Naive thymus-derived CD4-positive, alpha-beta T cell (primary cell): ENCODE measurements at regions of chr20 and their contacts with region 1.

Region 1: GRCh38 chr20:38926142-38926933 is at the start of gene FAM83D:
- DNase-seq: peak; percentile 86 to 98 (median 92)
- ATAC-seq: peak; percentile 97
- H3K4me3 ChIP-seq: peak within 1 kb of the TSS; percentile 61
- H3K4me3 Mint-ChIP-seq: peak within 1 kb of the TSS; percentile 76 to 90 (median 80)
- H3K27ac ChIP-seq: peak within 1 kb of the TSS; percentile 64
- H3K27ac Mint-ChIP-seq: peak within 1 kb of the TSS in 8 of 9 donors; percentile 27 to 83 (median 72)
- H3K4me1 ChIP-seq: peaks cover 5 to 22% of the 10 kb centered on the region in 2 donors
- H3K4me1 Mint-ChIP-seq: peaks cover 6 to 43% (median 17%) of the 10 kb centered on the region in 7 donors
- H3K27me3 ChIP-seq: no peaks in the 10 kb centered on the region
- H3K27me3 Mint-ChIP-seq: no peaks in the 10 kb centered on the region
- total RNA-seq, gene FAM83D: 1.4 to 11.1 (median 1.8) TPM

Region 2: DNA sequence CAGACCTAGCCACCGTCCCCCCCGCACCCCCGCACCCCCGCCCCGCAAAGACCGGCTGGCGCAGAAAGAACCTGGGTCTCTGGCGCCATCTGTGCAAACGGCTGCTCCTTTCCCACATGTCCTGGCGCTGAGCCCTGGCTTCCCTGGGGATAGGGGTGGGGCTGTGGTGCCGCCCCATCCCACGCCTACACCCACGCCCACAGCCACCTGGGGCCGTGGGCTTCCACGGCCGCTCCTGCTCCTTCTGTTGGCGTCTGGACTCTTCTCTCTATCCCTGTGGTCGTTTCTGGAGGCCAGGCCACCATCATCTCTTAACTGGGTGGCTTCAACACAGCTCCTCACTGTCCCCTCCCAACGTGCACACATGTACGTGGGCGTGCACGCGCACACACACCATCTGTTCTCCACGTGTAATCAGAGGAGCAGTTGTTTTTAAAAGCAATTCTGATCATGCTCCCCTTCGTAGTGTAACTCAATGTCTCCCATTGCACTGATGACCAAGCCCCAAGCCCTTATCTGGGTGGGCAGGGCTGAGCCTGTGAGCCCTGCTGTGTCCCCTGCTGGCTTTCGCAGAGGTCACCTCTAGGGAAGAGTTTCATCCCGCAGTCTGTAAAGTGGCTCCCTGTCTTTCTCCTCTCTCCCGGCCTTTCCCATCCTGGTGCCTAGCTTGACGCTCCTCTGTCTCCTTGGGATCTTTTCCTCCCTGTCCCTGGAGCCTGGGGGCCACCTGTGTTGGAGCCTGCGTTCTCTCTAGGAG is 32.1 kb before region 1 on chr20:
- CTCF ChIA-PET with region 1: no interaction called
- POLR2A ChIA-PET with region 1: no interaction called
- intact Hi-C with region 1: no loop called
- DNase-seq: no peak
- ATAC-seq: peak; percentile 9
- H3K4me3 ChIP-seq: no peak overlapping the region
- H3K4me3 Mint-ChIP-seq: peak overlapping the region in 5 of 10 donors; percentile 17 to 69 (median 36)
- H3K27ac ChIP-seq: no peak overlapping the region
- H3K27ac Mint-ChIP-seq: peak overlapping the region in 8 of 9 donors; percentile 49 to 86 (median 76)
- H3K4me1 ChIP-seq: peaks cover 7 to 10% of the 10 kb centered on the region in 2 donors
- H3K4me1 Mint-ChIP-seq: peaks cover 21 to 47% (median 29%) of the 10 kb centered on the region in 7 donors
- H3K27me3 ChIP-seq: no peaks in the 10 kb centered on the region
- H3K27me3 Mint-ChIP-seq: no peaks in the 10 kb centered on the region

Region 3: GRCh38 chr20:39070484-39071231 is 144.3 kb after region 1 on chr20:
- CTCF ChIA-PET with region 1: no interaction called
- POLR2A ChIA-PET with region 1: no interaction called
- intact Hi-C with region 1: no loop called
- DNase-seq: no peak
- ATAC-seq: no peak
- H3K4me3 ChIP-seq: no peak overlapping the region
- H3K4me3 Mint-ChIP-seq: no peak overlapping the region
- H3K27ac ChIP-seq: no peak overlapping the region
- H3K27ac Mint-ChIP-seq: no peak overlapping the region
- H3K4me1 ChIP-seq: no peaks in the 10 kb centered on the region
- H3K4me1 Mint-ChIP-seq: no peaks in the 10 kb centered on the region
- H3K27me3 ChIP-seq: no peaks in the 10 kb centered on the region
- H3K27me3 Mint-ChIP-seq: peaks cover 13 to 45% (median 22%) of the 10 kb centered on the region in 5 donors

Region 4: GRCh38 chr20:39081255-39081654 is 154.9 kb after region 1 on chr20:
- CTCF ChIA-PET with region 1: no interaction called
- POLR2A ChIA-PET with region 1: no interaction called
- intact Hi-C with region 1: loop called in 1 of 2 experiments (anchors 1 kb)
- DNase-seq: peak; percentile 46 to 81 (median 68)
- ATAC-seq: peak; percentile 78
- H3K4me3 ChIP-seq: no peak overlapping the region
- H3K4me3 Mint-ChIP-seq: no peak overlapping the region
- H3K27ac ChIP-seq: no peak overlapping the region
- H3K27ac Mint-ChIP-seq: no peak overlapping the region
- H3K4me1 ChIP-seq: no peaks in the 10 kb centered on the region
- H3K4me1 Mint-ChIP-seq: peaks cover 0 to 12% (median 0%) of the 10 kb centered on the region in 7 donors
- H3K27me3 ChIP-seq: no peaks in the 10 kb centered on the region
- H3K27me3 Mint-ChIP-seq: peaks cover 11 to 52% (median 26%) of the 10 kb centered on the region in 5 donors